Tibial artery (tissue), 4 donors: ENCODE measurements at regions of chr2 and their contacts with region 1.

Region 1: GRCh38 chr2:207769597-207770486 is at the start of gene FZD5:
- DNase-seq: peak; percentile 95 to 99
- H3K4me3 ChIP-seq: peak within 1 kb of the TSS; percentile 80 to 96
- H3K27ac ChIP-seq: peak within 1 kb of the TSS; percentile 79 to 82
- H3K4me1 ChIP-seq: peaks cover 0 to 25% (median 14%) of the 10 kb centered on the region in 4 donors
- H3K27me3 ChIP-seq: no peaks in the 10 kb centered on the region
- CTCF ChIP-seq: peak; percentile 53 to 62

Region 2: GRCh38 chr2:207625018-207625907 is 144.6 kb before region 1 on chr2 and contains the start of gene METTL21A:
- intact Hi-C with region 1: loop called (anchors 2 kb)
- DNase-seq: peak; percentile 75 to 93
- H3K4me3 ChIP-seq: peak within 1 kb of the TSS; percentile 87 to 98
- H3K27ac ChIP-seq: peak within 1 kb of the TSS; percentile 78 to 94
- H3K4me1 ChIP-seq: peaks cover 0 to 38% (median 7%) of the 10 kb centered on the region in 4 donors
- H3K27me3 ChIP-seq: no peaks in the 10 kb centered on the region
- CTCF ChIP-seq: peak; percentile 35 to 44

Region 3: GRCh38 chr2:207710814-207711740 is 58.8 kb before region 1 on chr2 and contains the start of gene CCNYL1:
- intact Hi-C with region 1: loop called (anchors 2 kb)
- DNase-seq: peak; percentile 98 to 99
- H3K4me3 ChIP-seq: peak within 1 kb of the TSS; percentile 79 to 99
- H3K27ac ChIP-seq: peak within 1 kb of the TSS; percentile 86 to 91
- H3K4me1 ChIP-seq: peaks cover 0 to 29% (median 11%) of the 10 kb centered on the region in 4 donors
- H3K27me3 ChIP-seq: no peaks in the 10 kb centered on the region
- CTCF ChIP-seq: peak; percentile 46 to 54

Region 4: DNA sequence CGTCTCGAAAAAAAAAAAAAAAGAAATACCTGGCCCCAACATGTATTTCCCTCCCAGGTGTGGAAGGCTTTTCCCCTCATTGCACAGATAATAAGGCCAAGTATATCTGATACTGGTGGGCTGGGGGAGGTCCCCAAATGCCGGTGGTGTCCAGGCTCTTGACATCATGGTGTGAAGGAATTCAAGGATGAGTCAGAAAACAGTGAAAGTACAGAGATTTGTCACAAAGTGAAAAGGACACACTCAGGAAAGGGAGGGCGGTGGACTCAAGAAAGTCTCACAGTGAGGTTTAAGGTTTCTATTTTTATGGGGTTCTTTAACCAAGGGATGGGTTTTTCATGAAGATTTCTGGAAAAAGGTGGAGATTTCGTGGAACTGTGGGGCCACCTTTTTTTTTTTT is 37.7 kb after region 1 on chr2:
- intact Hi-C with region 1: no loop called
- DNase-seq: no peak
- H3K4me3 ChIP-seq: no peak overlapping the region
- H3K27ac ChIP-seq: no peak overlapping the region
- H3K4me1 ChIP-seq: no peaks in the 10 kb centered on the region
- H3K27me3 ChIP-seq: no peaks in the 10 kb centered on the region
- CTCF ChIP-seq: no peak

Region 5: GRCh38 chr2:207819839-207820784 is 50.3 kb after region 1 on chr2:
- intact Hi-C with region 1: no loop called
- DNase-seq: no peak
- H3K4me3 ChIP-seq: no peak overlapping the region
- H3K27ac ChIP-seq: no peak overlapping the region
- H3K4me1 ChIP-seq: peaks cover 0 to 11% (median 8%) of the 10 kb centered on the region in 4 donors
- H3K27me3 ChIP-seq: no peaks in the 10 kb centered on the region
- CTCF ChIP-seq: no peak

Region 6: GRCh38 chr2:207974216-207974605 is 204.4 kb after region 1 on chr2:
- intact Hi-C with region 1: loop called (anchors 5 kb)
- DNase-seq: no peak
- H3K4me3 ChIP-seq: no peak overlapping the region
- H3K27ac ChIP-seq: no peak overlapping the region
- H3K4me1 ChIP-seq: peaks cover 0 to 13% (median 4%) of the 10 kb centered on the region in 4 donors
- H3K27me3 ChIP-seq: no peaks in the 10 kb centered on the region
- CTCF ChIP-seq: no peak

Region 7: GRCh38 chr2:208025037-208025813 is 255.4 kb after region 1 on chr2 and contains the start of gene PLEKHM3:
- intact Hi-C with region 1: loop called (anchors 10 kb)
- DNase-seq: peak; percentile 83 to 88
- H3K4me3 ChIP-seq: peak within 1 kb of the TSS; percentile 80 to 88
- H3K27ac ChIP-seq: peak within 1 kb of the TSS; percentile 77 to 84
- H3K4me1 ChIP-seq: peaks cover 0 to 22% (median 12%) of the 10 kb centered on the region in 4 donors
- H3K27me3 ChIP-seq: no peaks in the 10 kb centered on the region
- CTCF ChIP-seq: no peak

Region 8: DNA sequence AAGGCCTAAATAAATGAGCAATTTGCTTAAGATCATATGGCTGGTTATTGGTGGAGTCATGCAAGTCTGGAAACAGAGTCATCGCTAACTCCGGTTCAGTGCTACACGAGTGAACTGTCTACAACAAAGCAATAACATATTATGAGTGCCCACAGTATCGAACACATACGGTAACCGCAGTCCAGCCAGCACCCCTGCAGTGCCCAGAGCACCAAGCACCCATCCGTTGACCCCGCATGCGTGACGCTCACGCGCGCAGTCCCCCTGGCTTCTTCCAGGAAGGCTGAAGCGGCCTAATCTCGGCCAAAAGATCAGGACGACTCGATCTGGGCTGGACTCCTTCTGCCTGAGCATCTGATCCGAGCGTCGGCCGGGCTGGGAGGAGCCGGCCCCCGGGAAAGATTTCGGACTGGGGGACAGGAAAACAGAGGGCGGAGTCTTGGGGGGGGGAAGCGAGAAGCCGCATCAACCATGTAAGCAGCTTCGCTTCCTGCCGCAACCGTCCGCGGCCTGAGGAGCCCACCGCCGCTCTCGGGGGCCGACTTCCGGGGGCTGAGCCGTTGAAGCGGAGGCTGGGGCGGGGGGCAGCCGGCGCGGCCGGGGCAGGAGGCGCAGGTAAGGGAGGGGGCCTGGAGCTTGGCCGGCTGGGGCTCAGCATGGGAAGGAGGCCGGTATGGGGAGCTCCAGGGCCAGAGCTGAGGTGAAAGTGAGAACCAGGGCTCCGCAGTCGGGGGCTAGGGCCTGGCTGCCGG is 496.1 kb after region 1 on chr2 and contains the start of gene PIKFYVE:
- intact Hi-C with region 1: loop called (anchors 5 kb)
- DNase-seq: peak; percentile 96 to 98
- H3K4me3 ChIP-seq: peak within 1 kb of the TSS; percentile 84 to 99
- H3K27ac ChIP-seq: peak within 1 kb of the TSS; percentile 96 to 98
- H3K4me1 ChIP-seq: peaks cover 0 to 38% (median 24%) of the 10 kb centered on the region in 4 donors
- H3K27me3 ChIP-seq: no peaks in the 10 kb centered on the region
- CTCF ChIP-seq: peak in 1 of 2 experiments; percentile 13